ENCODE measurements at regions of chr10 and their contacts with region 1.

Region 1: GRCh38 chr10:114060456-114060855 is 16.8 kb downstream of the ADRB1 start:
- DNase-seq: no peak
- ATAC-seq: no peak
- H3K4me3 ChIP-seq: no peak overlapping the region
- H3K4me3 Mint-ChIP-seq: no peak overlapping the region
- H3K27ac ChIP-seq: no peak overlapping the region
- H3K27ac Mint-ChIP-seq: no peak overlapping the region
- H3K4me1 ChIP-seq: peaks cover 0 to 13% of the 10 kb centered on the region in 2 experiments
- H3K4me1 Mint-ChIP-seq: peaks cover 0 to 6% (median 1%) of the 10 kb centered on the region in 3 donors
- H3K27me3 ChIP-seq: peaks cover 0 to 5% of the 10 kb centered on the region in 2 experiments
- H3K27me3 Mint-ChIP-seq: peaks cover 3 to 6% of the 10 kb centered on the region in 2 donors

Region 2: GRCh38 chr10:114045136-114046086 is 15.0 kb before region 1 on chr10:
- CTCF ChIA-PET with region 1: interaction called in 1 of 2 experiments, 10 read pairs
- POLR2A ChIA-PET with region 1: interaction called in 1 of 2 experiments, 7 read pairs
- DNase-seq: peak in 8 of 35 experiments; percentile 2 to 33 (median 10)
- ATAC-seq: peak; percentile 38 to 49 (median 45)
- H3K4me3 ChIP-seq: peak overlapping the region in 1 of 2 donors; percentile 79
- H3K4me3 Mint-ChIP-seq: peak overlapping the region; percentile 50 to 80 (median 66)
- H3K27ac ChIP-seq: no peak overlapping the region
- H3K27ac Mint-ChIP-seq: no peak overlapping the region
- H3K4me1 ChIP-seq: peaks cover 11 to 27% of the 10 kb centered on the region in 2 experiments
- H3K4me1 Mint-ChIP-seq: peaks cover 13 to 22% (median 15%) of the 10 kb centered on the region in 3 donors
- H3K27me3 ChIP-seq: peaks cover 12 to 30% of the 10 kb centered on the region in 2 experiments
- H3K27me3 Mint-ChIP-seq: peaks cover 56 to 66% of the 10 kb centered on the region in 2 donors